Mammary epithelial cell (primary cell): ENCODE measurements at regions of chr12 and their contacts with region 1.

Region 1: GRCh38 chr12:3913278-3913677 is 40.1 kb upstream of the PARP11 start:
- DNase-seq: no peak
- H3K4me3 ChIP-seq: no peak overlapping the region
- H3K27ac ChIP-seq: no peak overlapping the region
- H3K4me1 ChIP-seq: no peaks in the 10 kb centered on the region
- H3K27me3 ChIP-seq: peaks cover 2% of the 10 kb centered on the region
- CTCF ChIP-seq: no peak

Region 2: DNA sequence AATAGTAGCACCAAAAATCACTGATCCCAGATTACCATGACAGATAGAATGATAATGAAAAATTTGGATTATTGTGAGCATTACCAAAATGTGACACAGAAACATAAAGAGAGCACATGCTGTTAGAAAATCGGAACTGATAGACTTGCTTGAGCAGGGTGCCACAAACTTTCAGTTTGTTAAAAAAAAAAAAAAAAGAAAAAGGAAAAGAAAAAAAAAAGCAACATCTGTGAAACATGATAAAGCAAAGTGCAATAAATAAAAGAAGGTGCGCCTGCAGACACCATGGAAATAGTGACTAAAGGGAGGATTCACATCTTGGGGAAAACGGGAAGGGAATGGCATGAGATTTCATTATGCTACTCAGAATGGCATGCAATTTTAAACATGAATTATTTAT is 33.4 kb before region 1 on chr12:
- CTCF ChIA-PET with region 1: no interaction called
- dilution Hi-C with region 1: loop called (anchors 5 kb)
- in situ Hi-C with region 1: no loop called
- intact Hi-C with region 1: no loop called
- DNase-seq: no peak
- H3K4me3 ChIP-seq: no peak overlapping the region
- H3K27ac ChIP-seq: no peak overlapping the region
- H3K4me1 ChIP-seq: no peaks in the 10 kb centered on the region
- H3K27me3 ChIP-seq: peaks cover 3% of the 10 kb centered on the region
- CTCF ChIP-seq: no peak

Region 3: GRCh38 chr12:4112290-4112689 is 199.0 kb after region 1 on chr12:
- CTCF ChIA-PET with region 1: no interaction called
- dilution Hi-C with region 1: no loop called
- in situ Hi-C with region 1: no loop called
- intact Hi-C with region 1: no loop called
- DNase-seq: no peak
- H3K4me3 ChIP-seq: no peak overlapping the region
- H3K27ac ChIP-seq: no peak overlapping the region
- H3K4me1 ChIP-seq: peaks cover 62% of the 10 kb centered on the region
- H3K27me3 ChIP-seq: no peaks in the 10 kb centered on the region
- CTCF ChIP-seq: no peak